ENCODE measurements at regions of chr12 and their contacts with region 1.

Region 1: GRCh38 chr12:124613151-124613585 is 45.8 kb upstream of the NCOR2 start:
- DNase-seq: no peak

Region 2: DNA sequence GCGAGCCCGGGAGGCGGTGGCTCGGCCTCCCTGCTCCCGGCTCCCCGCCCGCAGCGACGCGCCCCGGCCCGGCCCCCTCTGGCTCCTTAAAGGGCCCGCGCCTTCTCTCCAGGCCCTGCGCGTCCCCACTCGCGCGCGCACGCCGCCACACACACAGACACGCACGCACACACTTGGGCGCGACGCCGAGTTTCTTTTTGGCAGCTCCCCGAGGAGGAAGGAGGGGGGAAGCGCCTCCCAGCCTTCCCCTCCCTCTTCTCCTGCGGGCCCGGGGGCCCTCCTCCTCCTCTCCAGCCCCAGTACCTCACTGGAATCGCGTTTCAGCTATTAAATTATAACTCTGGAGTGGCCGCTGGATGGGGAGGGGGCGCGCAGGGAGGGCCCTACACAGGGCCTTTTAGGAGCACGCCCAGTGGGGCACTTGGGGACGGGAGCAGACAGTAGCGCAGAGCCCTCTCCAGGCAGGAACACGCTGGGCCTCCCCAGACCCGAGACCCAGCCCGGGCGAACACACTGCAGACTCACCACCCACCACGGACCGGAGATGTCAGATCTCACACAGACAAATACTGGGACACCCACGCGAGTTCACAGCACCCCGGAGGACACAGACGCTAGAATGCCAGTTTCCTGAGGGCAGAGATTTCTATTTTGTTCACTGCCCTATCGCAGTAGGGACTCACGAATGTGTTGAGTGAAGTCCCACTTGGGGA is 45.4 kb before region 1 on chr12:
- intact Hi-C with region 1: no loop called
- DNase-seq: peak; percentile 98

Region 3: DNA sequence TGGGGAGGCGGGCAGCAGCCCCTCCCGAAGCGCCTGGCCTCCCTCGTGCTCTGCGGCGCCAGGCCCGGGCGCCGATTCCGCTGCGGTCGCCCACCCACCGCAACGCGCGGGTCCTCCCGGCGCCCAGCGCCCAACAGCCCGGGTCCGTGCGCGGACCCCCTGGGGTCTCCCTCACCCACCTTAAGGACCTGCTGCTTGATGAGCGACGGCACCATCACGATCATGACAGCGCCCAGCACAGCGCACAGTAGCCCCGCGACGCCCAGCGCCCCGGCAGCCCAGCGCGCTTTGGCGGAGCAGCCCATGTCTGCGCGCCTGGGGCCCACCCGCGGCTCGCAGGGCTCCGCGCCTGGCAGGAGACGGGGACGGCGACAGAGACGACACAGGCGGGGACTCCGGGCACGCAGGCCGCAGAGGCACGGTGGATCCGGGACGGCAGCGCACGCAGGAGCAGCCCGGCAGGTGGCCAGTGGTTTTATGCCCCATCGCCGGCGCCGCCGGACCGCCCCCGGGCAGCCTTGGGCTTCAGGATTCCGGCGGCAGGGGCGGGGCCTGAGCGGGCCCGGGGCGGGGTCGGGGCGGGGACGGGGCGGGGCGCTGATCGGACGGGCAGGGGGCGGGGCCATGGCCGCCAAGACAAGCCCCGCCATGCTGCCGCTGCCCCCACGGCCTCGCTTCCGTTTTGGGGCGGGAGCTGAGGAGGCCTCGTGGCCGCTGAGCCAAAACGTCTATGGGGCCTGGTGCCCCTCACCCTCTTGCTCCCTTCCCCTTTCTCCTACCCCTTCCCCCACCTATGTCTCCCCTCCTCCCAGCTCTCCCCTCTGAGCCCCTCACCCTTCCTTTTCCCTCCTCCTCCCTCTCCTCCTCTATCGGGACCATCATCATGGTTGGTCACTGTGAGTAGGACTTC is 250.5 kb after region 1 on chr12 and contains the start of gene SCARB1:
- intact Hi-C with region 1: loop called in 1 of 2 experiments (anchors 2 kb)
- DNase-seq: peak; percentile 93
- total RNA-seq, gene SCARB1: 13.0 to 14.3 TPM

Measured in posterior vena cava (tissue), 2 donors.